ENCODE measurements at regions of chr2 and their contacts with region 1.

Region 1: GRCh38 chr2:84939426-84940087 is 31.4 kb upstream of the KCMF1 start:
- DNase-seq: peak; percentile 87
- H3K4me3 Mint-ChIP-seq: peak overlapping the region; percentile 62
- H3K27ac Mint-ChIP-seq: peak overlapping the region; percentile 93
- H3K4me1 Mint-ChIP-seq: peaks cover 66% of the 10 kb centered on the region
- H3K27me3 Mint-ChIP-seq: no peaks in the 10 kb centered on the region

Region 2: GRCh38 chr2:84539729-84540128 is 399.8 kb before region 1 on chr2:
- CTCF ChIA-PET with region 1: no interaction called
- POLR2A ChIA-PET with region 1: no interaction called
- intact Hi-C with region 1: no loop called
- DNase-seq: no peak
- H3K4me3 Mint-ChIP-seq: no peak overlapping the region
- H3K27ac Mint-ChIP-seq: no peak overlapping the region
- H3K4me1 Mint-ChIP-seq: peaks cover 14% of the 10 kb centered on the region
- H3K27me3 Mint-ChIP-seq: no peaks in the 10 kb centered on the region

Region 3: GRCh38 chr2:84888401-84889276 is 50.9 kb before region 1 on chr2:
- CTCF ChIA-PET with region 1: no interaction called
- POLR2A ChIA-PET with region 1: no interaction called
- intact Hi-C with region 1: loop called (anchors 2 kb)
- DNase-seq: peak; percentile 71
- H3K4me3 Mint-ChIP-seq: peak overlapping the region; percentile 58
- H3K27ac Mint-ChIP-seq: peak overlapping the region; percentile 90
- H3K4me1 Mint-ChIP-seq: peaks cover 47% of the 10 kb centered on the region
- H3K27me3 Mint-ChIP-seq: no peaks in the 10 kb centered on the region

Region 4: DNA sequence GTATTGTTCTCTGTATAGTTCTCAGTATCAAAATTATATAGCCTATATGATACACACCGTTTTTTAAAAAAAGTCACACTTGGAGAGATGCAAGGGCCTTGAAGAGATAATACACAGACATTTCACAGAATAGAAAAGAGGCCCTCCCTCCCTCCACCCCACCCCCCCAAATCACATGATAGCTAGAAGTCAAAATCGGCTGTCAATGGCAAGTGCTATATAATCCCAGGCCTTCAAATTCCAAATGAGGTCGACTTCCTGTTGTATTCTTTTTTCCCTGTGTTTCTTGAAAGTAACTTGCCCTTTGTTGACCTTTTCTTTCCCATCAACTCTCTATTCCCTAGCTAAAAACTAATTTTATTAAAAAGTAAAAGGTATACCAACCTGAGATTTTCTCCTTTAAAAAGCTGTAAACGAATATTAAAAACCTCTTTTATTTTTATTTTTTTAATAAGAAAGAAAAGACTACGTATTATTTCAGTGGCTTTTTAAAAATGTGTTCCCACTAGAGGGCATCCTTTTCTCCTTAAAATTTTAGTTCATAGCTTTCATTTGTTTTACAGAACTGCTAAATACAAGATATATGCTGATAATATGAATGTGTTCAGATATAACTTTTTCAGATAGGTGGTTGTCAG is 78.0 kb after region 1 on chr2:
- CTCF ChIA-PET with region 1: interaction called, 12 read pairs
- POLR2A ChIA-PET with region 1: interaction called, 5 read pairs
- intact Hi-C with region 1: loop called (anchors 1 kb)
- DNase-seq: no peak
- H3K4me3 Mint-ChIP-seq: no peak overlapping the region
- H3K27ac Mint-ChIP-seq: peak overlapping the region; percentile 66
- H3K4me1 Mint-ChIP-seq: peaks cover 70% of the 10 kb centered on the region
- H3K27me3 Mint-ChIP-seq: no peaks in the 10 kb centered on the region